Posterior vena cava (tissue), 2 donors: ENCODE measurements at regions of chr12 and their contacts with region 1.

Region 1: GRCh38 chr12:27975244-27976136 is 3.0 kb upstream of the PTHLH start:
- DNase-seq: peak; percentile 84

Region 2: DNA sequence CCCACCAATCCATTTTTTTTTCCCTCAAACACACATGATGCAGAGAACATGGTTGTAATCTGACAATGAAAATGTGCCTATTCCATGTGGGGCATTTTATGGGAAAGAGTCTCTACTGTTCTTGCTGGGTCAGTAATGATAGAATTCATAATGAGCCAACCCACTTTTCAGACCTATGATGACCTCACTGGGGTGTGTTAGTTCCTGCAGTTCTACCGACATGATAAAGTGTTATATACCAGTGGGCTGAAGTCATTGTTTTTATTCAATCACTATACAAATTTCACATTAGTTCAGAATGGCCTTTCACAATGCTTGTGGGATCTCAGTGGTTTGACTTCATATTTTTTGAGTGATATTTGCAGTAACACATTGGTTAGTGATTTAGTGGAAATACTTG is 404.0 kb before region 1 on chr12:
- intact Hi-C with region 1: no loop called
- DNase-seq: no peak

Region 3: GRCh38 chr12:28189784-28190320 is 214.4 kb after region 1 on chr12:
- intact Hi-C with region 1: loop called in 1 of 2 experiments (anchors 5 kb)
- DNase-seq: no peak

Region 4: GRCh38 chr12:28683356-28683755 is 707.9 kb after region 1 on chr12:
- intact Hi-C with region 1: no loop called
- DNase-seq: no peak

Region 5: GRCh38 chr12:29655861-29656260 is 1680.4 kb after region 1 on chr12:
- intact Hi-C with region 1: no loop called
- DNase-seq: no peak